ENCODE measurements at regions of chr5 and their contacts with region 1.

Region 1: GRCh38 chr5:137498736-137499505 is at the start of gene SPOCK1:
- DNase-seq: peak; percentile 62 to 86 (median 72)
- H3K4me3 ChIP-seq: peak within 1 kb of the TSS; percentile 45 to 95 (median 82)
- H3K27ac ChIP-seq: peak within 1 kb of the TSS in 57 of 59 donors; percentile 48 to 96 (median 89)
- H3K27me3 ChIP-seq: no peaks in the 10 kb centered on the region
- CTCF ChIP-seq: peak; percentile 34 to 92 (median 72)
- total RNA-seq, gene SPOCK1: 164 to 817 (median 487) TPM

Region 2: GRCh38 chr5:137086342-137086741 is 412.6 kb before region 1 on chr5:
- intact Hi-C with region 1: loop called in 1 of 2 experiments (anchors 10 kb)
- DNase-seq: no peak
- H3K4me3 ChIP-seq: peak overlapping the region in 7 of 59 donors; percentile 4 to 40 (median 22)
- H3K27ac ChIP-seq: peak overlapping the region in 49 of 59 donors; percentile 1 to 81 (median 54)
- H3K27me3 ChIP-seq: no peaks in the 10 kb centered on the region
- CTCF ChIP-seq: peak in 22 of 56 donors; percentile 7 to 38 (median 22)

Region 3: DNA sequence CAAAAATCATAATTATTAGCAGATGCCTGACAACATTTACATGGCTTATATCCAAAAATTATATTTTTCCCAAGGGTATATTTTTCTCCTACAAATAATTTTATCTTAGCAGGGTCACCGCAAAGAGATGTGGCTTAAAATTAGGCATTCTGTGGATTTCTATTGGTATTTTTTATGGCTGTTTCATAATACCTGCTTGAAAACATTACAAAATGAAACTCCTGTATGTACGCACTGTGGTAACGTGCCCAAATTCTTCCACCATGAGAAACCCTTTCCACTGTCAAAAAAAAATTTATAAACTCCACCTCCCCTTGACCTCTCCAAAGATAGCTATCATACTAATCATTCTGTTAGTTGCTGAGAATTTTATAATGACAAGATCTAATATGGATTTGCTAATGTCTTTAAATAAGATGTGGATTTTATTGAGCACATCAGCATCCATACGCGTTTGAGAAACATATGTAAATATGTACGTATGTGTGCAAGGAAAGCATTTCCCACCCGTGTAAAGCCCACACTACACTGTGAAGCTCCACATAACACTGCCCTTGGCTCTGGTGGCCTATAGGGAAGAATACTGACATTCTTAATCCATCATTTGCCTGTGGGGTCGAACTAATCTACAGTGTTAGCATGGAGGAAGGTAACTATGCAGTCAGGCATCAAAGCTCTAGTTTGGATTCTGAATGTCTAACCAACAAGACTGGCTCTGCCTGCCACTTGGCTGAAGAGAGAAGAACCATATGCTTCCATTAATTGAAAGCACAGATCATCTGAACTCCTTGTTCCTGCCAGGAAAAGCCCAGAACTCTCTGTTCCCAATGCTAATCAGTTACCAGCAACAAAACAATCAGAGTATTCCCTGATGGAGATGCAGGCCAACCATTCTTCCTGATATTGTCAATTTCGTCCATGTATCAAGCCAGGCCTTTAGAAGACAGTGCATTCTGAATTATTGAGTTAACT is 244.5 kb before region 1 on chr5:
- intact Hi-C with region 1: loop called in 1 of 2 experiments (anchors 5 kb)
- DNase-seq: peak in 4 of 10 donors; percentile 21 to 79 (median 68)
- H3K4me3 ChIP-seq: peak overlapping the region in 2 of 59 donors; percentile 10 to 28
- H3K27ac ChIP-seq: peak overlapping the region in 58 of 59 donors; percentile 32 to 99 (median 90)
- H3K27me3 ChIP-seq: no peaks in the 10 kb centered on the region
- CTCF ChIP-seq: peak in 2 of 56 donors; percentile 18

Region 4: DNA sequence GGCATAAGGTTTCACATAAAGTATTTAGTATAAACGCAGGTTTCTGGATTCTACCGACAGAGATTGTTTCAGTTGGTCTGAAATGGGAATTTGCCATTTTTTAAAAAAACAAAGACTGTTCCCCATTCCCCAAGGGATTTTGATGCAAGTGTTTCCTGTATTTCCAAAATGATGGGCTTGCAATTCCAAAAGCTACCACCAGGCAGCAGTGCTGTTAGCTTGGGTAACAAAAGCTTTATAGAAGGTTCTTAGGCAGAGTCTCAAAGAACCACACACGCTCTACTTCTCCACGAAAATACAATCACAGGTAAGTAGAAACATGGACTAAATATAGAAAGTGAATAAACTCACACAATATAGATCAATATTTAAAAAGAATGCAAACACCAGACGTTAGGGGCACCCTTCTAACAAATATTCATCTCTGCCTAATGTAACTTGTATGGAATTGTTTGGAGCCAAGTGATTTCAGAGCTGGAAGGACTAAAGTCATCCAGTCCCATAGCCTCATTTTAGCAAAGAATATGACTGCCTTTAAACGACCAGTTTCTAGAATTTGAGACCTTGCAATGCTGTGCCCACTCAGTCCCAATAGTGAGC is 154.1 kb before region 1 on chr5:
- intact Hi-C with region 1: loop called (anchors 2 to 5 kb)
- DNase-seq: peak in 2 of 10 donors; percentile 64 to 69
- H3K4me3 ChIP-seq: no peak overlapping the region
- H3K27ac ChIP-seq: peak overlapping the region in 45 of 59 donors; percentile 1 to 81 (median 58)
- H3K27me3 ChIP-seq: no peaks in the 10 kb centered on the region
- CTCF ChIP-seq: peak; percentile 59 to 89 (median 75)

Measured in dorsolateral prefrontal cortex (tissue), 120 donors.